Activated CD4-positive, alpha-beta T cell treated with anti-CD3 and anti-CD28 coated beads for 36 hours (primary cell): ENCODE measurements at regions of chr16 and their contacts with region 1.

Region 1: DNA sequence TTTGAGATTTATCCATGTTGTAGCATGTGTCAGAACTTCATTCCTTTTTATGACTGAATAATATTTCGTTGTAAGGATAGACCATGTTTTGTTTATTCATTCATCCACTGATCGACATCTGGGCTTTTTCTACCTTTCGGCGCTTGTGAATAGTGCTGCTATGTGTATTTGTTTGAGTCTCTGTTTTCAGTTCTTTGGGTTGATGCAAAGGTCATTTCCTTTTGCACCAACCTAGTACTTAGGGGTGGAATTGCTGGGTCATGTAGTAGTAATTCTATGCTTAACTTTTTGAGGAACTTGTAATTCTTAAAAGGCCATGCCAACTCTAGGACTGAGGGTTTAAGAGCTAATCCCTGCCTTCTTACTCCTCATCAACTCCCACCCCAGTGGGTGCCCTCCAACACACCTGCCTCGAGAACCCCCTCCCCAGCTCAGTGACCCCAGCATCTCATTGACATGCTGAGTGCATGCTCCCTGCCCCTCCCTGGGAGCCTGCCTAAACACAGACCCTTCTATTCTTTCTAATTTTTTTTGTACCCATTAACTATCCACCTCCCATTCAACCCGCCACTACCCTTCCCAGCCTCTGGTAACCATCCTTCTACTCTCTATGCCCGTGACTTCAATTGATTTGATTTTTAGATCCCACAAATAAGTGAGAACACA is 51.2 kb downstream of the ABAT start:
- DNase-seq: no peak
- ATAC-seq: no peak
- H3K4me3 Mint-ChIP-seq: no peak overlapping the region
- H3K27ac Mint-ChIP-seq: no peak overlapping the region
- H3K4me1 Mint-ChIP-seq: peaks cover 31% of the 10 kb centered on the region
- H3K27me3 Mint-ChIP-seq: no peaks in the 10 kb centered on the region

Region 2: GRCh38 chr16:8692502-8692901 is 33.1 kb before region 1 on chr16:
- CTCF ChIA-PET with region 1: interaction called, 3 read pairs
- POLR2A ChIA-PET with region 1: no interaction called
- intact Hi-C with region 1: loop called in 1 of 2 experiments (anchors 1 kb)
- DNase-seq: no peak
- ATAC-seq: no peak
- H3K4me3 Mint-ChIP-seq: no peak overlapping the region
- H3K27ac Mint-ChIP-seq: no peak overlapping the region
- H3K4me1 Mint-ChIP-seq: no peaks in the 10 kb centered on the region
- H3K27me3 Mint-ChIP-seq: no peaks in the 10 kb centered on the region

Region 3: GRCh38 chr16:8740775-8741355 is 15.2 kb after region 1 on chr16:
- CTCF ChIA-PET with region 1: no interaction called
- POLR2A ChIA-PET with region 1: no interaction called
- intact Hi-C with region 1: no loop called
- DNase-seq: no peak
- ATAC-seq: no peak
- H3K4me3 Mint-ChIP-seq: no peak overlapping the region
- H3K27ac Mint-ChIP-seq: no peak overlapping the region
- H3K4me1 Mint-ChIP-seq: no peaks in the 10 kb centered on the region
- H3K27me3 Mint-ChIP-seq: no peaks in the 10 kb centered on the region